ENCODE measurements at regions of chr3 and their contacts with region 1.

Region 1: GRCh38 chr3:124761250-124761796 is 31.1 kb downstream of the UMPS start:
- DNase-seq: peak; percentile 65
- H3K4me3 ChIP-seq: no peak overlapping the region
- H3K27ac ChIP-seq: no peak overlapping the region
- H3K4me1 ChIP-seq: no peaks in the 10 kb centered on the region
- CTCF ChIP-seq: peak; percentile 94

Region 2: DNA sequence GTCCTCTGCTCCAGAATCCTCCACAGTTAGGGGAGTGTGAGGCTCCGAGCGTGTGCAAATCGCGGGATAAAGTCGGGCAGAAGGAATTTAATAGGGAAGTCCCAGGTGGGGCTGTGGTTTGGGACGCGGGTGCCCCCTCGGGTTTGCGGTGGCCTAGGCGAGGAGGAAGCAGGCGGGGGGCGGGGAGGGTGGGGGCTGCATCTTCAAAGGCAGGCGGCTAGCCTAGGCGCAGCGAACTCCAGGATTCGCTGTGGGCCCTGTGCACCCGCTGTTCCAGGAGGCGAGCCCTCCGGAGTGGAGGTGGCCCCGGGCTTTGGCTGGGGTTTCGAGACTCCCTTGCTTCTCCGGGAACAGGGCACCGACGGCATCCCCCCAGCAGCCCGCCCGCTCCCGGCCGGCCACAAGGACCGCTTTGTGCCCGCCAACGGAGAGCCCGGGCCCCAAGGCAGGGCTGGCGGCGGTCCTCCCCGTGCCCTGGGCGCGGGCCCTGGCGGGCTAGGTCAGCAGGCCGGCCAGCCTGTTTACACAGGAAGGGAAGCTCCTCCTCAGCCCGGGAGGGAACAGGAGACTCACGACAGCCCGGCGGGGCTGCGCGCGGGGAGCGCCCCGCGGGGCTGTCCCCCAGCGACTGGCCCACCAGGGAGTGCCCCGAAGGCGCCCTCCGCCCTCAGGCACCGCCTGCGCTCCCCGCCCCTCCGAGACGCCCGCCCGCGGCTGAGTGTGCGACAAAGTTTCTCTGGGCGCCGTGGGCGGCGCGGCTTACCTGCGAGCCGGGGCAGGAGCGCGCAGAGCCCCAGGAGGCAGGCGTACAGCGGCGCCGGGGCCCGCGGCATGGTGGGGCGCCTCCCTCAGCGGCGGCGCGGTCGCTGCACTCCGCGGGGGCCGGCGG is 125.1 kb after region 1 on chr3:
- CTCF ChIA-PET with region 1: no interaction called
- POLR2A ChIA-PET with region 1: no interaction called
- intact Hi-C with region 1: no loop called
- DNase-seq: no peak
- H3K4me3 ChIP-seq: no peak overlapping the region
- H3K27ac ChIP-seq: no peak overlapping the region
- H3K4me1 ChIP-seq: no peaks in the 10 kb centered on the region
- CTCF ChIP-seq: no peak

Region 3: DNA sequence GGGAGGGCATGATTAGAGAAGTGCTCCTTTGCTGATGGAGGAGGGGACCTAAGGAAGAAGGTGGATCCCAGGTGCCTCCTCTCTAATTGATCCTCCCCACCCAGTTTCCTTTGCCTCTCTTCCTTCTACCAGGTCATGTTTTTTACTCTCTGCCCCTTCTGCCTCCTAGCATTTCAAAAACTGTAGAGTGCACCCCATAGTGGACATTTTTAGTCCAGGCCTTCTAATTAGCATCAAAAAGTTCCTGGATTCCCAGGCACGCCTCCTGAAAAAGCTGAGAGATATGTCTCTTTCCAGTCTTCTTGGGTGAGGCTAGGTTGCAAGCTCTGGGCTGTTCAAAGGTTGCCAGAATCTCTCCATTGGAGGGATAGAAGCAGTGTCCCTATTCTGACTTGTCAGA is 144.5 kb after region 1 on chr3:
- CTCF ChIA-PET with region 1: no interaction called
- POLR2A ChIA-PET with region 1: interaction called, 4 read pairs
- intact Hi-C with region 1: loop called (anchors 2 kb)
- DNase-seq: no peak
- H3K4me3 ChIP-seq: no peak overlapping the region
- H3K27ac ChIP-seq: no peak overlapping the region
- H3K4me1 ChIP-seq: no peaks in the 10 kb centered on the region
- CTCF ChIP-seq: no peak

Region 4: DNA sequence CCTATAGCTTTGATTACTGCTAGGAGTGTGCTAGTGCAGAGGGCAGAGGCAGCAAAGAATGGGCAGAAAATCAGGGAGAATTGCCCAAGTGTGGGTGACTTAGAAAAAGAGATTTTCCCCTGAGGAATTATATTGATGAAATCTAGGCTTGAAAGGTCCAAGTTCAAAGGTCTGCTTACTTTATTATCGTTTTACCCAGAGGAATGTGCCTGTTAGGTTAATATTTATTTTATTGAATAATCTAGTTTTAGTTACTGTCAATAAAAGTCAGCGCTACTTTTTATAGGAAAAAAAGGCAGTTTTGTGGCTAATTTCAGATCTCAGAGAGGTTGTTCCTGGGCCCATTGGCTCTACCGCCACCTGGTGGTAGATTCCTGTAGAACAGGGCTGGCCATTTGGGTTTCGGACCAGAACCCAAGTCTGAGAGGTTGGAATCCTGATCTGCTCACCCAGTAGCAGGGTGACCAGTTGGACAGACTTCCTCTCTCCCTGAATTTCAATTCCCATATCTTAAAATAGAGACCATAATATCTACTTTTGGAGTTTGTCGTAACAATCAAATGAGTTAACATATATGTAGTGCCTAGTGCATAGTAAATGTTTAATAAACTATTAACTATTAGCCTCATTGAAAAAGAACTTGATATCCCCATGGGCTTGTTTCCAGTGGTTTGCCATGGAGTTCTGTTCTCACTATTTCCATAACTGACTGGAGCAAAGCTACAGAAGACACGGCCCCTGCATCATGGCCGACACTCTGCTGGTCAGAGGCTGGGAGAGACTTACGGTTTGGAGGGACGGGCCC is 676.5 kb after region 1 on chr3:
- CTCF ChIA-PET with region 1: no interaction called
- POLR2A ChIA-PET with region 1: no interaction called
- intact Hi-C with region 1: loop called (anchors 5 kb)
- DNase-seq: peak; percentile 47
- H3K4me3 ChIP-seq: no peak overlapping the region
- H3K27ac ChIP-seq: no peak overlapping the region
- H3K4me1 ChIP-seq: no peaks in the 10 kb centered on the region
- CTCF ChIP-seq: peak; percentile 99

Measured in OCI-LY7 (cell line).